GM10248 (cell line): ENCODE measurements at regions of chr11 and their contacts with region 1.

Region 1: DNA sequence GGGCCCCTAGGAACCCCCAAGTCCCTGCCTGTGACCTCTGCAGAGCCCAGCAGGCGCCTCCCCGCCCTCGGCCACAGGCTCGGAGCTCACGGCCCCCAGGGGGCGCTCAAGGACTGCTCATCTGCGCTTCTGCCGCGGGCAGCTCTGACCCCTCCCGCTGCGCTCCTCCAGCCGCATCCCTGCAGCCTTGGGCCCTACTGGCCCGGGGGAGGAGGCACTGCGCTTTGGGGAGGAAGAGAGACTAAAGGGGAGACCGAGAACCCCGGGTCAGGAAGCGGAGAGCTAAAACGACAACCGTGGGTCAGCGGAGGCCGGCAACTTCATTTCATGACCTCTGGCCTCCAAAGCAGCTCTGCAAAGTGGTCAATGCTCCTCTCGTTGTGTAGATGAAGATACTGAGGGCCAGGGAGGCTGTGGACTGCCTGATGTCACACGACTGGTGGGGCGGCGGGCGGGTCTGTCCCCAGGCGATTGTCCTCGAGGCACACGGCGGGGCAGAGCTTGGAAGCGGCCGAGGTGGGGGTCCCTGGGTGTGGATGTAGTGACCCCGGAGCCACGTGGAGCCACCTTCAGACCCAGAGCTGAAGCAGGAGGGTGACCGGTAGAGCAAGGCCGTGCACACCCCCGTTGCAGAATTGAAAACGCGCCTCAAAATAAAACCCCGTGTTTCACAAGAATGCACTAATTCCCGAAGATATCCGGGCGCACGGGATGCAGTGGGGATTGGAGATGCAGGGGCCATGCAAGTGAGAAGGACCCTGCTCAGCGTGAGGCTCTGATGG is 2.7 kb upstream of the KRTAP5-6 start:
- DNase-seq: peak; percentile 92
- CTCF ChIP-seq: peak; percentile 93

Region 2: GRCh38 chr11:1546077-1546535 is 148.1 kb before region 1 on chr11:
- CTCF ChIA-PET with region 1: no interaction called
- POLR2A ChIA-PET with region 1: no interaction called
- DNase-seq: no peak
- CTCF ChIP-seq: no peak

Region 3: DNA sequence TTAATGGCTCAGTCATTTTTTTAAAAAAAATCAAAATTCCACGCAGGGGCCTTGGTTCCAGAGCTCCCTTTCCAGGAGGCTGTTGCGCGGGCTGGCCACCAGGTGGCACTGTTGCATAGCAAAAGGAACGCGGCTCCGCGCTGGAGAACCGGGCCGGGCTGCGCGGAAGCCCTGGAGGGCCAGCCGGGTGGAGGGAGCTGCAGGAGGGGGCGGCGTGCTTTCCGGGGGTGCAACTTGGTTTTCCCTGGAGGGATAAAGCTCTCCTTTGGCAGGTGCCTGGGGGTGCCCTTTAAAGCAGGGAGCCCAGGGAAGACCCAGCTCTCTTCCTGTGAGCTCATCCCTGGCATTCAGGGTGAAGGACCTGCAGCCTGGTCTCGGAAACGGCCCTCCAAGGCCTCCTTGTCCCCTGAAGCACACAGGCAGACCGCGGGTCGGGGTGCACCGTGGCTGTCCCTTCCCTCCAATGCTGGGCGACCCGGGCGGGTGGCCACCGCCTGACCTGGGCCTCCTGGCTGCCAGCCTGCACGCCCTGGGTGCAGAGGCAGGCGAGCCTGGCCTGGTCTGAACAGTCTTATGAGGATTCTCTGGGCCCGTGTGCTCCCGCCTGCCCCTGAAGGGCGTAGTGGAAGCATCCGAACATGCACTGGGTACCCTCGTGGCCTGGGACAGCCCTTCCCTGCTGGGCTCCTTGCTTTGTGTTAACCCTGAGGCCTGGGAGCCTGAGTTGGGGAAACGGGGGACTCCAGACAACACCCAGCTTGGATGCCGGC is 41.3 kb before region 1 on chr11:
- CTCF ChIA-PET with region 1: interaction called, 68 read pairs
- POLR2A ChIA-PET with region 1: no interaction called
- DNase-seq: peak; percentile 90
- CTCF ChIP-seq: peak; percentile 97

Region 4: GRCh38 chr11:1706634-1707400 is 12.6 kb after region 1 on chr11:
- CTCF ChIA-PET with region 1: interaction called, 51 read pairs
- POLR2A ChIA-PET with region 1: no interaction called
- DNase-seq: no peak
- CTCF ChIP-seq: no peak

Region 5: DNA sequence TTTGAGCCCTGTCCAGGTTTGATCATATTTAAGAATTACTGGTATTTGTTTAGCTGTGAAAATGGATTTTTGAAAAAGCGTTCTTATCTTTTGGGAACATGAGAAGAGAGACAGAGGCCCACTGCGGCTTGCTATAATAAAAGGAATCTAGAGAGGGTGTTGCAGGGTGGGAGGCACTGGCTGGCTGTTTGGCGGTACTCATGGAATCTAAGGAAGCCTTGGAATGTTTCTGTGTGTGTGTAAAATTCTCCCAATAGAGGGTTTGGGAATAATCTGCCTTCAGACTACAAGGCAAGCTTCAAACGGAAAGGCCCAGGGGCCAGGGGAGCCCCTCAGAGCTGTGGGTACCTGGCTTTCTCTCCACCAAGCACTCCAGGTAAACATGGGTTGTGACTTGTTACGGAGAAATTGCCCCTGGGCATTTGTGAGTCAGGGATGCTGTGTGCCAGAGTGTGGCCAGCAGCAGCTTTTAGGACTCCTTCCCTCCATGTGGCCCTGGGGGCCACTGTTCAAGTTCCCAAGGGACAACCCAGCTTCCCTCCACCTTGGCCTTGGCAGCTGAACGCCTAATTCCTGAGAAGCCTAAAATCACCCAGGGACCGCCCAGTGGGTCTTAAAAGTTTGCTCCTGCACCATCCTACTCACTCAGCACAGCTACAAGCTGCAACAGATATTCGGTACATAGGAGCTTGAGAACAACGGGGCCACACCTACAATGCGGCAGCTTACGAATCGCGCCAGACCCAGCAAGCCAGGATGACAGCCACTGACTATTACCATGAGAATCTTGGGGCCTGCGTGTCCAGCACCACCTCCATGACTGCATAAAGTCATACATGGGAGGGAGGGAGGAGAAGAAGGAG is 126.4 kb after region 1 on chr11:
- CTCF ChIA-PET with region 1: interaction called, 21 read pairs
- POLR2A ChIA-PET with region 1: no interaction called
- DNase-seq: no peak
- CTCF ChIP-seq: no peak

Region 6: GRCh38 chr11:1845561-1846452 is 151.6 kb after region 1 on chr11:
- CTCF ChIA-PET with region 1: interaction called, 16 read pairs
- POLR2A ChIA-PET with region 1: no interaction called
- DNase-seq: no peak
- CTCF ChIP-seq: no peak

Region 7: GRCh38 chr11:1896923-1897322 is 202.7 kb after region 1 on chr11:
- CTCF ChIA-PET with region 1: interaction called, 11 read pairs
- POLR2A ChIA-PET with region 1: no interaction called
- DNase-seq: peak; percentile 66
- CTCF ChIP-seq: peak; percentile 37

Region 8: DNA sequence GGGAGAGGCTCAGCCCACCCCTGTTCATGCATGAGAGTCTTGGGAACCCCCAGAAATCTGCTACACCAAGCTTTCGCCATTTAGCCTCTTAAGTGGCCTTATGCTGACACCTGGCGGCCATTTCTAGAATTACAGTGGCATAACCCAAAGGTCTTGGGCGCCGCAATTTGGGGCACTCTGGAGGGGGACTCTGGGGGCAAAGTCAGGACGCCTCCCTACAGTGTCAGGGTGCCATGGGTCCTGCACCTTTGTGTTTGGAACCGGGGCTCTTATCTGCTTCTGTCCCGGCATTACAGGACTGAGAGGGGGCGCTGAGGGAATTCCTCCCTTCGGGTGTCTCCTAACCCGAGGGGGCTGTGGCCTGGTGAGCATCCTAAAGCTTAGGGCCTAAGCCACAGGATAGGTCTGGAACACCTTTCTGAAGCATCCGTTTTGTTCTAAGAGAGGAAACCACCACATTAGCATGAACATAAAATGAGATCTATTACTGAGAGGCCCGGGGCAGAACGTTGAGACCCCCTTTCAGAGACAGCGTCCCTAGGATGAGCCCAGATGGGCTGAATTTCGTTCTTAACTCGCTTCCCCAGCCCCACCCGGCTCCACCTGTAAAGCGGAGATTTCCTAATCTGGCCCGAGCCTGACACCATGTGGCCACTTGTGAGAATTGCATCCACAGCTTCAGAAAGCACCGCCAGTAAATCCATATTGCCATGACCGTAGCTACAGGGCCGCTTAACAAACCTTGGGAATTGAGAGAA is 457.4 kb after region 1 on chr11:
- CTCF ChIA-PET with region 1: interaction called, 155 read pairs
- POLR2A ChIA-PET with region 1: no interaction called
- DNase-seq: peak; percentile 84
- CTCF ChIP-seq: peak; percentile 88